Natural killer cell (primary cell): ENCODE measurements at regions of chr10 and their contacts with region 1.

Region 1: DNA sequence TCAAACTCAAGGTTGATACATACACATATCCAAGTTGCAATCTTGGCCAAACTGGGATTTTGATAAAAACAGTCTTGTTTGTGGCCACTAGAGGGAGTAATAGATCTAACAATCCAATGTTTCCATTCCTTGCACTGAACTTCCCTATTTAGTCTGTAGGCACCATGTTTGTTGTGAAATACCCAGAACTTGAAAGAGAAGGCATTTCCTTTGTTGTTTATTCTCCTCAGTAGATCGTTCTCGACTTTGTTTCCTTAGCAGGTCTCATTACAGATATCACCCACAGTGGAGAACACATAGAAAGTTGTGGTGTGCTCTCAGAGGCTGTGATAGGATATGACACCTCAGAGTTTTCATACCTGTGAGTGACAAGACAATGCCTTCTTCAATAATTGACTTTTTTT is 70.3 kb upstream of the MXI1 start:
- DNase-seq: peak in 1 of 2 donors; percentile 79
- ATAC-seq: peak; percentile 74 to 87 (median 81)
- H3K4me3 ChIP-seq: no peak overlapping the region
- H3K4me3 Mint-ChIP-seq: peak overlapping the region; percentile 15
- H3K27ac ChIP-seq: no peak overlapping the region
- H3K27ac Mint-ChIP-seq: peak overlapping the region; percentile 77 to 81
- H3K4me1 ChIP-seq: peaks cover 5% of the 10 kb centered on the region
- H3K4me1 Mint-ChIP-seq: peaks cover 22 to 25% of the 10 kb centered on the region in 2 donors
- H3K27me3 ChIP-seq: no peaks in the 10 kb centered on the region
- H3K27me3 Mint-ChIP-seq: no peaks in the 10 kb centered on the region
- CTCF ChIP-seq: peak; percentile 86

Region 2: GRCh38 chr10:109883859-109884771 is 253.0 kb before region 1 on chr10:
- intact Hi-C with region 1: loop called (anchors 2 kb)
- DNase-seq: peak; percentile 51 to 86
- ATAC-seq: peak; percentile 69 to 95 (median 93)
- H3K4me3 ChIP-seq: no peak overlapping the region
- H3K4me3 Mint-ChIP-seq: no peak overlapping the region
- H3K27ac ChIP-seq: no peak overlapping the region
- H3K27ac Mint-ChIP-seq: peak overlapping the region; percentile 20 to 62
- H3K4me1 ChIP-seq: peaks cover 8% of the 10 kb centered on the region
- H3K4me1 Mint-ChIP-seq: peaks cover 14 to 31% of the 10 kb centered on the region in 2 donors
- H3K27me3 ChIP-seq: no peaks in the 10 kb centered on the region
- H3K27me3 Mint-ChIP-seq: no peaks in the 10 kb centered on the region
- CTCF ChIP-seq: peak; percentile 93

Region 3: DNA sequence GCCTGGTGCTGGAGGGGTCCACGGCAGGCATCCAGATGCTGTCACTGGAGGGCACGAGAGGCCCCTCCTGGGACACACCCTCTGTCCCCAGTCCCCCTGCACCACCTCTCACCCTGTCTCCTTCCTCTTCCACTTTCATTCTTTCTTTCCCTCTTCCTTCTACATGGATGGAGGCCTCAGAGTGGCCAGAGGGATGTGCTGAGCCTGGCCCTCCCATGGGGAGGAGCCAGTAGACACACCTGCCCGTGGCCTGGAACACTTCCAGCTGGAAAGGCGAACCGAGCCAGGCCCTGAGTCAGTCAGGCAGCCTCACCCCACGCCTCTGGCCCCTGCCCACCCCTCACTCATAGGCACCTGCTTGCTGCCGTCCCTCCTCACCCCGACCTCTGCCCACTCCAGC is 14.3 kb after region 1 on chr10:
- intact Hi-C with region 1: no loop called
- DNase-seq: no peak
- ATAC-seq: no peak
- H3K4me3 ChIP-seq: no peak overlapping the region
- H3K4me3 Mint-ChIP-seq: no peak overlapping the region
- H3K27ac ChIP-seq: no peak overlapping the region
- H3K27ac Mint-ChIP-seq: no peak overlapping the region
- H3K4me1 ChIP-seq: peaks cover 14% of the 10 kb centered on the region
- H3K4me1 Mint-ChIP-seq: peaks cover 25 to 33% of the 10 kb centered on the region in 2 donors
- H3K27me3 ChIP-seq: peaks cover 51% of the 10 kb centered on the region
- H3K27me3 Mint-ChIP-seq: peaks cover 60 to 84% of the 10 kb centered on the region in 2 donors
- CTCF ChIP-seq: no peak

Region 4: GRCh38 chr10:110192552-110192951 is 55.4 kb after region 1 on chr10:
- intact Hi-C with region 1: no loop called
- DNase-seq: peak in 1 of 2 donors; percentile 41
- ATAC-seq: peak in 1 of 3 donors; percentile 22
- H3K4me3 ChIP-seq: no peak overlapping the region
- H3K4me3 Mint-ChIP-seq: no peak overlapping the region
- H3K27ac ChIP-seq: no peak overlapping the region
- H3K27ac Mint-ChIP-seq: no peak overlapping the region
- H3K4me1 ChIP-seq: no peaks in the 10 kb centered on the region
- H3K4me1 Mint-ChIP-seq: peaks cover 0 to 8% of the 10 kb centered on the region in 2 donors
- H3K27me3 ChIP-seq: peaks cover 49% of the 10 kb centered on the region
- H3K27me3 Mint-ChIP-seq: peaks cover 65 to 73% of the 10 kb centered on the region in 2 donors
- CTCF ChIP-seq: no peak

Region 5: DNA sequence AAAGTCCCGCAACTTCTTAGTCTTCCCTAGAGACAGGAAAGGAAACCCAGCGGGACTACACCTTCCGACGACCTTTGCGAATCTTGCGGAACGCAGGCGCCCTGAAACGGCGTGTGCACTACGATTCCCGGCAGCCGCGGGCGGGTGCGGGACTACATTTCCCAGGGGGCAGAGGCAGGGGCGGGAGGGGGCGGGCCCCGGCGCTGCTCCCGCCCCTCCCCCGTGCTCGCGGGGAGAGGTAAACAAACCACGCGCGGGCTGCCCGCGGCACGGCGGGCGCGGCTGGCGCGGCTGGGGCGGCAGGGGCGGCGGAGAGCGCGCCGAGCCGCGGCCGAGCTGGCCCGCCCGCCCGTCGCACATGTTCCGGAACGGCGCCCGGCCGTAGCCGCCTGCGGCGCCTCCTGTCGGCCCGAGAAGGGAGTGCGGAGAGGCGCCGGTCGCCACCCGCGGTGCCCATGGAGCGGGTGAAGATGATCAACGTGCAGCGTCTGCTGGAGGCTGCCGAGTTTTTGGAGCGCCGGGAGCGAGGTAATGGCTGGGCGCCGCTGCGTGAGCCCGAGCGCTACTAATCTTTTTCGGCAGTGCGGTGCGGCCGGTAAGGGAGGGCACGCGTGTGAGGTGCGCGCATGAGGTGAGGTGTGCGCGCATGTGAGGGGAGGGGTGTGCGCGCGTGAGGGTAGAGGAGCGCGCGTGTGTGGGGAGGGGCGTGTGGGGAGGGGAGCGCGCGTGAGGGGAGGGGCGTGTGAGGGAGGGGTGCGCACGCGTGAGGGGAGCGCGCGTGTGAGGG is 88.8 kb after region 1 on chr10:
- intact Hi-C with region 1: loop called (anchors 1 kb)
- DNase-seq: peak; percentile 79 to 95
- ATAC-seq: peak; percentile 70 to 87 (median 77)
- H3K4me3 ChIP-seq: peak overlapping the region; percentile 66
- H3K4me3 Mint-ChIP-seq: peak overlapping the region; percentile 96
- H3K27ac ChIP-seq: peak overlapping the region; percentile 60
- H3K27ac Mint-ChIP-seq: peak overlapping the region; percentile 84
- H3K4me1 ChIP-seq: peaks cover 16% of the 10 kb centered on the region
- H3K4me1 Mint-ChIP-seq: peaks cover 25 to 31% of the 10 kb centered on the region in 2 donors
- H3K27me3 ChIP-seq: peaks cover 6% of the 10 kb centered on the region
- H3K27me3 Mint-ChIP-seq: peaks cover 22 to 33% of the 10 kb centered on the region in 2 donors
- CTCF ChIP-seq: peak; percentile 51

Region 6: GRCh38 chr10:110354322-110354766 is 217.2 kb after region 1 on chr10:
- intact Hi-C with region 1: loop called (anchors 5 kb)
- DNase-seq: peak; percentile 76 to 87
- ATAC-seq: peak; percentile 76 to 91 (median 86)
- H3K4me3 ChIP-seq: no peak overlapping the region
- H3K4me3 Mint-ChIP-seq: no peak overlapping the region
- H3K27ac ChIP-seq: no peak overlapping the region
- H3K27ac Mint-ChIP-seq: peak overlapping the region in 1 of 2 donors; percentile 29
- H3K4me1 ChIP-seq: peaks cover 52% of the 10 kb centered on the region
- H3K4me1 Mint-ChIP-seq: peaks cover 13 to 21% of the 10 kb centered on the region in 2 donors
- H3K27me3 ChIP-seq: no peaks in the 10 kb centered on the region
- H3K27me3 Mint-ChIP-seq: peaks cover 8 to 13% of the 10 kb centered on the region in 2 donors
- CTCF ChIP-seq: peak; percentile 93

Region 7: GRCh38 chr10:110567201-110568054 is 430.3 kb after region 1 on chr10 and contains the start of gene SMC3:
- intact Hi-C with region 1: loop called (anchors 5 kb)
- DNase-seq: peak; percentile 90 to 95
- ATAC-seq: peak; percentile 86 to 94 (median 87)
- H3K4me3 ChIP-seq: peak within 1 kb of the TSS; percentile 64
- H3K4me3 Mint-ChIP-seq: peak within 1 kb of the TSS; percentile 94
- H3K27ac ChIP-seq: peak within 1 kb of the TSS; percentile 75
- H3K27ac Mint-ChIP-seq: peak within 1 kb of the TSS; percentile 96 to 99
- H3K4me1 ChIP-seq: peaks cover 12% of the 10 kb centered on the region
- H3K4me1 Mint-ChIP-seq: peaks cover 40 to 41% of the 10 kb centered on the region in 2 donors
- H3K27me3 ChIP-seq: no peaks in the 10 kb centered on the region
- H3K27me3 Mint-ChIP-seq: peaks cover 13 to 16% of the 10 kb centered on the region in 2 donors
- CTCF ChIP-seq: no peak
- total RNA-seq, gene SMC3: 36.6 to 38.5 (median 37.8) TPM